Posterior cingulate gyrus (tissue), 11 donors: ENCODE measurements at regions of chr16 and their contacts with region 1.

Region 1: GRCh38 chr16:68328151-68328859 is 17.5 kb downstream of the PRMT7 start:
- DNase-seq: peak; percentile 62 to 96 (median 76)

Region 2: DNA sequence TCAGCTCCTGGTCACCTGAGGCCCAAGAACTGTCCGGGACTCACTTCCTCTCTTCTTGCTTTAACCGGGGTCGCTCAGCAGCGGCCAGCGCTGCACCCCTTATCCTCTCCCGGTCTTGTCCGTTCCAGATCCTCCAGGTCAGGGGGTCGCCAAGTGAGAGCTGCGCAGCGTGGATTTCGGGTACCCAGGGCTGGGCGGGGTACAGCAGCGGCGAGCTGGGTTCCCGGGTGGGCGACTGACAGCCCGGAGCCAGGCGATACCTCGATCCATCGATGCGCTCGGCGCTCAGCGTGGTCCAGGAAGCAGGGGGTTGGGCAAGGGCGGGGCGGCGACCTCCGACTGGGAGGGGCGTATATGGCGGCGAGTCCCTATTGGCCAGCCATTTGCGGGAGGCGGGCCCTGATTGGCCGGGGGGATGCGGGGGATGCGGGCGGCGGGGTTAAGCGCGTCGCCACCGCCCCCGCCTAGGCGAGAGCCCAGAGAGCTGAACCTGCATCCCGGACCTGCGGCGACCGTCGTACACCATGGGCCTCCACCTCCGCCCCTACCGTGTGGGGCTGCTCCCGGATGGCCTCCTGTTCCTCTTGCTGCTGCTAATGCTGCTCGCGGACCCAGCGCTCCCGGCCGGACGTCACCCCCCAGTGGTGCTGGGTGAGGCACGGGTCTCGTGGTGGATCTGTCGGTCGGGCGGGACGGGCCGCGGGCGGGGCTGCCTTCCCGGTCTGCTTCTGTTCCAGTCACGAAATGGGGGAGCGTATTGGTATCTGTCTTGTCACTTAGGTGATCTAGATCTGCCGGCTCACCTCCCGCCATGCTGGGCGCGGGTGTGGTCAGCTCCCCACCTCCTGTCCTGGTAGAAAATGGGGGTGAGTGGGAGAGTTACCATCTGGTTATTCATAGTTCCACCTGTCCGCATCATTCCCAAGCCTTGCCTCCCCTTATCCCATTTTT is 83.1 kb before region 1 on chr16 and contains the start of gene PLA2G15:
- intact Hi-C with region 1: loop called (anchors 5 kb)
- DNase-seq: peak; percentile 95 to 99 (median 96)

Region 3: GRCh38 chr16:68264128-68265077 is 63.9 kb before region 1 on chr16 and contains the start of gene SLC7A6:
- intact Hi-C with region 1: loop called (anchors 1 kb)
- DNase-seq: peak; percentile 56 to 96 (median 70)